ENCODE measurements at regions of chrX and their contacts with region 1.

Region 1: DNA sequence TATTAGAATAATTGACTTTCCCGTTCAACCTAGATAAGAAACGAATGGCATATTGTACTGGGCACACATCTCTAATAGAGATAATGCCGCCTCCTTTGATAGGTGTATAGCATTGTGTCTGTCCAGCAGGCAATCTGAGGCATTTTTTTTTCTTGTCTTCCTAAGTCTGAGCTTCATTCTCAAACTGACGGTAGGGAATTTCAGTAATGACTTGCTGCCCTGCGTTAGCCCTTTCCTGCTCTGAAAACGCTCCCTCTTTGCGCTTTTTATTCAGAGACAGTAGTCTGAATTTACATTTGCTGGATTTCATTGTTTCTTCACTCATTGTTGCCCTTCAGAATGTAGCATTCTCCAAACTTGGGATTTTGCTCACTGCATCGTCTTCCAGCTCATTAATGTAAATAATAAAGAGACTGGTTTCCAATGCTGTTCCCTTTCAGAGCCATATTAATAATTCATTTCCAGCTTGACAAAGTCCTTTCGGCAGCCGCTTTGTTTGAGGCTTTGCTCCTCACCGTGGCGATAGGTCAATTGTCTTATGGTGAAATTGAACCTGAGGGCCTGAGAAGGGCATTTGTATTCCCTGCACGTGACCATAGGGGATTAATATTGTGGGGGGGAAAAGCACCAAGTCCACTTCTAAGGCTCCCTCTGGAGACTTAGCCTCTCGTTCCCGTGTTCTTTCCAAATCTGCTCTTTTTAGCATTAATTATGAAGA is 412.1 kb downstream of the SMARCA1 start:
- DNase-seq: no peak
- ATAC-seq: no peak
- H3K4me3 Mint-ChIP-seq: no peak overlapping the region
- H3K27ac Mint-ChIP-seq: no peak overlapping the region
- H3K4me1 Mint-ChIP-seq: no peaks in the 10 kb centered on the region
- H3K27me3 Mint-ChIP-seq: no peaks in the 10 kb centered on the region

Region 2: DNA sequence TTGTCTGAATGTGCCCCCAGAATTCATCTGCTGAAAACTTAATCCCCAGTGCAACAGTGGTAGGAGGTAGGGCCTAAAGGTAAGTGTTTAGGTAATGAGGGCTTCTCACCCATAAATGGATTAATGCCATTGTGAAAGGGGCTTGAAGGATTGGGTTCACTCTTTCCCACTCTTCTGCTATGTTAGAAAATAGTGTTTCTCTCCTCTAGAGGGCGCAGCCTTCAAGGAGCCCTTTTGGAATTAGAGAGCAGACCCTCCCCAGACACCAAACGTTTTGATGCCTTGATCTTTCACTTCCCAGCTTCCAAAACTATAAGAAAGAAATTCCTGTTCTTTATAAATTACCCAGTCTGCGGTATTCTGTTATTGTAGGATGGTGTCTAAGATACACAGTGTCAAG is 294.3 kb before region 1 on chrX:
- CTCF ChIA-PET with region 1: no interaction called
- POLR2A ChIA-PET with region 1: no interaction called
- intact Hi-C with region 1: loop called in 1 of 2 experiments (anchors 5 kb)
- DNase-seq: no peak
- ATAC-seq: no peak
- H3K4me3 Mint-ChIP-seq: no peak overlapping the region
- H3K27ac Mint-ChIP-seq: no peak overlapping the region
- H3K4me1 Mint-ChIP-seq: no peaks in the 10 kb centered on the region
- H3K27me3 Mint-ChIP-seq: no peaks in the 10 kb centered on the region

Region 3: DNA sequence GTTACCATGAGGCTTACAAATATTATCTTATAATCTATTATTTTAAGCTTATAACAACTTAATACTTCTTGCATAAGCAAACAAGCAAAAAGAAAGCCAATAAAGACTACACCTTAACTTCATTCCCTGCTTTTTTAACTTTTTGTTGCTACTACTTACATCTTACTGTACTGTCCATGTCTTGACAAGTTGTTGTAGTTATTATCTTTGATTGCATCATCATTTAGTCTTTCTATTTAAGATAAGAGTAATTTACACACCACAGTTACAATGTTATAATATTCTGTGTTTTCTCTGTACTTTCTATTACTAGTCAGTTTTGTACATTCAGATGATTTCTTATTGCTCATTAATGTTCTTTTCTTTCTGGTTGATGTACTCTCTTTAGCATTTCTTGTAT is 65.5 kb after region 1 on chrX:
- CTCF ChIA-PET with region 1: no interaction called
- POLR2A ChIA-PET with region 1: no interaction called
- intact Hi-C with region 1: no loop called
- DNase-seq: no peak
- ATAC-seq: no peak
- H3K4me3 Mint-ChIP-seq: no peak overlapping the region
- H3K27ac Mint-ChIP-seq: no peak overlapping the region
- H3K4me1 Mint-ChIP-seq: no peaks in the 10 kb centered on the region
- H3K27me3 Mint-ChIP-seq: no peaks in the 10 kb centered on the region

Measured in activated CD4-positive, alpha-beta T cell treated with anti-CD3 and anti-CD28 coated beads for 36 hours (primary cell).